ENCODE measurements at regions of chr22 and their contacts with region 1.

Region 1: DNA sequence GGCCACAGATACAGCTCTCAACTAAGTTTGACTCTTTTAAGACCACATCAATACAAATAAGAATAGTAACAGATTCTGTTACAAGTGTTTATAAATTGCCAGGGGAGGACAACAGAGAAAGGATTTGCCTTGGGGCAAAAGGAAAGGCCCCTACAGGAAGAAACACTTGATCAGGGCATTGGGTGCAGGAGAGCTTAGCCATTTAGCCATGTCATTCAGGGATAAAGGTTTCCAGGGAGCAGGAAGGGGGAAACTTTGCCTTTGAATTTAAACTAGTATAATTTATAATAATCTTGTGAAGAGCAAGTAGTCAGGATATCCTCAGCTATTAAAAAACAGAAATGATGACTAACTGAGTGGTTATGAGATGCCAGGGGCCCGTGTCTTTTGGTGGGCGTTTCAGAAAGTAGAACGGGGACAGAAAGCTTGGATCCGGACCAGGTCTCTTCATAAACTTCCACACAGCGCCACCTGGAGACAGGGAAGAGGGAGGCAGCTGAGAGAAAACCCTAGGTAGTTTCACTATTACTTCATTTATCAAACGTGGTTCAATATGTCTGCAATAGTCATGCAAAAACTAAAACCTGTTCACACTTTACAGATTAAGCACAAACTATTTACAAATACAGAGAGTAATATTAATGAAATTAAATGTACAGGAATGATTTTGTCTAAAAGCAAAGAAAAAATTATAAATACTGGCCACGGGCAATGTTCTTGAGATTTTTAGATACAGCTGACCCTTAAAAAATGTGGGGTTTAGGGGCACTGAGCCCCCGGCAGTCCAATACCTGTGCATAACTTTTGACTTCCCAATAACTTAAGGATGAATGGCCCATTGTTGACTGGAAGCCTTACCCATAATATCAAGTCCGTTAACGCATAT is 11.0 kb upstream of the SLC5A4 start:
- DNase-seq: peak; percentile 64 to 75 (median 65)
- ATAC-seq: peak; percentile 87 to 97 (median 94)
- H3K4me3 ChIP-seq: peak overlapping the region in 1 of 3 donors; percentile 25
- H3K27ac ChIP-seq: no peak overlapping the region
- H3K4me1 ChIP-seq: peaks cover 0 to 12% (median 2%) of the 10 kb centered on the region in 4 donors
- H3K27me3 ChIP-seq: no peaks in the 10 kb centered on the region
- CTCF ChIP-seq: peak; percentile 84 to 90 (median 89)
- POLR2A ChIP-seq: no peak

Region 2: DNA sequence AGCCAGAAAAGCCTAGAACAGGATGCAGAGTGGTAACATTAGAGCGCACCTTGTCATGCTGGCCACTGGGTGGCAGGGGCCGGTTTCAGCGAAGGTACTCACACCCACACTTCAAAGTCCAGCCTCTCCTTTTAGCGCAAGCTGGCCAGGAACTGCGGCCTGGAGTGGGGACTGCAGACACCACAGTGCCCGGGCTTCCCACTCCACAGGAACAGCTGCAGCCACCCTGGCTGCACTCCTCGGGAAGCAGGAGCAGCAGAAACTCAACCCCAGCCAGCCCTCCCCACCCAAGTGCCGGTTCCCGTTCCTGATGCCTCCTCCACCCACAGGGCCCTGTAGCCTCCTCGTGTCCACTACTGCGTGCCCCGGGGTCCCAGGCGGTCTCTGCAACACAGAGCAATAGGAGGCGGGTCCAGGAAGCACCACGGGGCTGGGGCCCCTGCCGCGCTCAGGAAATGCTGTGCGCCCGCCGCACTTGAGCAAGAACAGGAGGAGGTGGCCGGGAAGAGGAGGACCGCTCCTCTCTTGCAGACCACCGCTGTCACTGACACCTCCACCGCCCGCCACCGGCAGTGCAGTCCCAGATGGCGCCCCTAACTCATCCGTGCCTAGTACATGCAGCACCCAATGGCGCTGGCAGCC is 63.5 kb before region 1 on chr22:
- intact Hi-C with region 1: loop called (anchors 5 to 10 kb)
- DNase-seq: peak; percentile 76 to 86 (median 85)
- ATAC-seq: peak; percentile 82 to 89 (median 87)
- H3K4me3 ChIP-seq: peak overlapping the region; percentile 7 to 33 (median 31)
- H3K27ac ChIP-seq: peak overlapping the region in 2 of 3 donors; percentile 17 to 35
- H3K4me1 ChIP-seq: peaks cover 0 to 5% (median 2%) of the 10 kb centered on the region in 4 donors
- H3K27me3 ChIP-seq: no peaks in the 10 kb centered on the region
- CTCF ChIP-seq: peak; percentile 69 to 78 (median 71)
- POLR2A ChIP-seq: no peak

Measured in right lobe of liver (tissue), 6 donors.